Gastrocnemius medialis (tissue), 4 donors: ENCODE measurements at regions of chr10 and their contacts with region 1.

Region 1: DNA sequence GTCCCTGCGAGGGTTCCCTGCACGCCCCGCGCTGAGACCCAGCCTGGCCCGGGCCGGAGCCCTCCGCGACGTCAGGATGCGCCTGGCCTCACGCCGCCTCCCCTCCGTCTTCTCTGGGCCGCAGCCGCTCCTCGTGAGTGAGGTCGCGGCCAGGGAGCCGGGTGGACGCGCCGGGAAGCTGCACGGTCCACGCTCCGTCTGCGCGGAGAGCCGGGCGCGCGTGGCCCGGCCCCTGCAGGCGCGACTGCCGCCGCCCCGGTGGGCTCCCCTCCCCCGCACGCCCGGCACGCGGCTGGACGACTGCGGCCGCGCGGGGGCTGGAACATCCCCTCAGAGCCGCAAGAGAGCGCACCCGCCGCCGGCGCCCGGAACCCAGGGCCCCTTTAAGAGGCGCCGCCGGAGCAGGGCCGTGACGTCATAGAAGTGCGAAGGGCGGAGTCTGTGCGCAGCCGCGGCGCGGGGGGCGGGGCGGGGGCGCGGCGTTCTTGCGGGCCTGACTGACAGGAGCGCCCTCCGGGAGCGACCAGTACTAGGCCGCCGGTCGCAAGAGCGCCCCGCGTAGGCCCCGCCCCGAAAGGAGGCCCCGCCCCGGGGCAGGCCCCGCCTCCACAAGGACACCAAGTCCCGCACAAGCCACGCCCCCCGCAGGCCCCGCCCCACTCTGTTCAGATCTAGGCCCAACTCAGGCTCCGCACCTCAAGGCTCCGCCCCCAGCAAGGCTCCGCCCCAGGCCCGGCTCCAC is 445 bp upstream of the INPP5A start:
- DNase-seq: peak; percentile 100
- ATAC-seq: peak; percentile 73 to 79
- H3K4me3 ChIP-seq: peak overlapping the region; percentile 62 to 82 (median 73)
- H3K27ac ChIP-seq: peak overlapping the region; percentile 83 to 94 (median 91)
- H3K4me1 ChIP-seq: peaks cover 52% of the 10 kb centered on the region in 2 donors
- H3K27me3 ChIP-seq: peaks cover 0 to under 1% (median 0%) of the 10 kb centered on the region in 3 donors
- CTCF ChIP-seq: peak in 4 of 5 experiments; percentile 35 to 64 (median 57)
- POLR2A ChIP-seq: peak; percentile 65 to 91

Region 2: DNA sequence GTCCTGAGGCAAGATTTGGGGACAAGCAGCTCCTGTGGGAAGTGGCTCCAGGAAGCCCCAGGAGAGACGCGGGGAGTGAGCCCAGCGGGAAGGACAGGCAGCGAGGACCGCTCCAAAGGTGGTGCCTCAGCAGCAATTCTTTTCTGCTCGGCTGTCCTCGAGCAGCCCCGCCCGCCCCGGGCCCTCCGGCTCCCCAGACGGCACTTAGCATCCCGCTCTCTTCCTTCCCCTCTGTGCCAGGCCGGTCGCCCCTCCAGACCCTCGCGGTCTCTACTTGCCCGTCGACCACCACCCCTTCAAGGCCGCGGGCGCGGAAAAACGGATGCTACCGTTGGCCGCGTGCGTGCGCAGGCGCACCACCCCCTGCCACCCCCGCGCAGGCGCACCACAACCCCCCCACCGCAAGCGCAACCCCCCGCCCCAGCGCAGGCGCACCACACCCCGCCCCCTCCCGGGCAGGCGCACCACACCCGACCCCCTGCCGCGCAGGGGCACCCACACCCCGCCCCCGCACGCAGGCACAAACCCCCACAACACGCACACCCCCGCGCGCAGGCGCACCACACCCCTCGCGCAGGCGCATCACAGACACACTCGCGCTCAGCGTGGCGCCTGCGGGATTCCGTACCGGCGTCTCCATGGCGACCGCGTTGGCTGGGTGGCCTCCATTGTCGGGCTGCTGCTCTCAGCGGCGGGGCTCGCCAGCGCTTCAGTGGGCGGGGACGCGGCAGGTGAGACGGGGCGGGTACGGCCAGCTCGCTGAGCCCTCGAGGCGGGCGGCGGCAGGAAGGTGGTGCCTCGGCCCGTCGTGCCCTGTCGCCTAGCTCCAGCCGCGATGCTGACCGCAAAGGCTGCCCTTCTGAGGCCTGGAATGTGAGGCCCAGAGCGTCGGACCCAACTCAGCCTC is 205.4 kb before region 1 on chr10 and contains the start of gene LRRC27:
- in situ Hi-C with region 1: no loop called
- intact Hi-C with region 1: loop called (anchors 5 kb)
- DNase-seq: peak; percentile 98
- ATAC-seq: peak; percentile 88 to 94
- H3K4me3 ChIP-seq: peak within 1 kb of the TSS; percentile 63 to 95 (median 92)
- H3K27ac ChIP-seq: peak within 1 kb of the TSS; percentile 89 to 91 (median 89)
- H3K4me1 ChIP-seq: peaks cover 30 to 34% of the 10 kb centered on the region in 2 donors
- H3K27me3 ChIP-seq: no peaks in the 10 kb centered on the region
- CTCF ChIP-seq: no peak
- POLR2A ChIP-seq: peak; percentile 53 to 69
- total RNA-seq, gene LRRC27: 1.0 to 7.0 (median 4.1) TPM

Region 3: GRCh38 chr10:132516771-132517725 is 20.1 kb before region 1 on chr10:
- in situ Hi-C with region 1: no loop called
- intact Hi-C with region 1: loop called (anchors 1 kb)
- DNase-seq: peak; percentile 92 to 97
- ATAC-seq: peak; percentile 76 to 83
- H3K4me3 ChIP-seq: peak overlapping the region; percentile 17 to 39 (median 31)
- H3K27ac ChIP-seq: peak overlapping the region; percentile 86 to 93 (median 88)
- H3K4me1 ChIP-seq: peaks cover 54 to 56% of the 10 kb centered on the region in 2 donors
- H3K27me3 ChIP-seq: no peaks in the 10 kb centered on the region
- CTCF ChIP-seq: peak in 1 of 5 experiments; percentile 6
- POLR2A ChIP-seq: peak; percentile 50 to 56

Region 4: GRCh38 chr10:132627666-132628531 is 90.8 kb after region 1 on chr10:
- in situ Hi-C with region 1: loop called (anchors 10 to 25 kb)
- intact Hi-C with region 1: loop called (anchors 1 kb)
- DNase-seq: peak; percentile 47 to 56
- ATAC-seq: peak; percentile 1 to 41
- H3K4me3 ChIP-seq: peak overlapping the region in 3 of 4 donors; percentile 13 to 38 (median 24)
- H3K27ac ChIP-seq: peak overlapping the region; percentile 90 to 99 (median 92)
- H3K4me1 ChIP-seq: peaks cover 61 to 66% of the 10 kb centered on the region in 2 donors
- H3K27me3 ChIP-seq: no peaks in the 10 kb centered on the region
- CTCF ChIP-seq: no peak
- POLR2A ChIP-seq: no peak

Region 5: DNA sequence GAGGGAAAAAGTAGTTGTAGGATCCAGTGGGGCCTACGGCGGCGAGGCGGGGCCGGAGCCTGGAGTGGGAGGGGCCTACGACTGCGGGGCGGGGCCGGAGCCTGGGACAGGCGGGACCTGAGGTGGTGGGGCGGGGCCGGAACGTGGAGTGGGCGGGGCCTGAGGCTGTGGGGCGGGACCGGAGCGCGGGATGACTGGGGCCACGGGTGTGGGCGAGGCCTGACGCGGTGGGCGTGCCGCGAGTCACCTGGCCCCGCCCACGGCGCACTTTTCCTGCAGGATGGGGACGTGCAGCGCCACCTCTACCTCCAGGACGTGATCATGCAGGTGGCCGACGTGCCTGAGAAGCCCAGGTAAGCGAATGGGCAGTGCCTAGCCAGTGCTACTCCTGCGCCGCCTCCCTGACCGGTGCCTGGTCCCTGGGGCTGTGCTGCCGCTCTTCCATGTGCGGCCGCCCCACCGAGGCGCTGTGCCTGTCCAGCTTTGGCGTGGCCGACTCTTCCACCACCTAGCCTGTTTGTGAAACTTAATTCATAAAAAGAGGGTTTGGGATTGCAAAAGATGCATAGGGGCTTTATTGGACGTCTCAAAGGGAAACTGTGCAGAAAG is 772.1 kb after region 1 on chr10:
- in situ Hi-C with region 1: no loop called
- intact Hi-C with region 1: loop called (anchors 2 kb)
- DNase-seq: peak; percentile 89 to 92
- ATAC-seq: peak; percentile 90 to 91
- H3K4me3 ChIP-seq: peak overlapping the region; percentile 77 to 99 (median 92)
- H3K27ac ChIP-seq: peak overlapping the region; percentile 81 to 99 (median 90)
- H3K4me1 ChIP-seq: peaks cover 24 to 26% of the 10 kb centered on the region in 2 donors
- H3K27me3 ChIP-seq: no peaks in the 10 kb centered on the region
- CTCF ChIP-seq: no peak
- POLR2A ChIP-seq: no peak